Activated CD8-positive, alpha-beta memory T cell treated with anti-CD3 and anti-CD28 coated beads, Interleukin-2, amount 10 ng/mL, durations not matched to agents 7 days and 5 days (primary cell): ENCODE measurements at regions of chr4 and their contacts with region 1.

Region 1: GRCh38 chr4:83284193-83285054 is at the start of gene COQ2:
- DNase-seq: peak; percentile 97
- ATAC-seq: peak; percentile 94
- H3K4me3 Mint-ChIP-seq: peak within 1 kb of the TSS; percentile 86
- H3K27ac Mint-ChIP-seq: peak within 1 kb of the TSS; percentile 99
- H3K4me1 Mint-ChIP-seq: peaks cover 46% of the 10 kb centered on the region
- H3K27me3 Mint-ChIP-seq: no peaks in the 10 kb centered on the region
- total RNA-seq, gene COQ2: 20.6 to 21.9 TPM

Region 2: DNA sequence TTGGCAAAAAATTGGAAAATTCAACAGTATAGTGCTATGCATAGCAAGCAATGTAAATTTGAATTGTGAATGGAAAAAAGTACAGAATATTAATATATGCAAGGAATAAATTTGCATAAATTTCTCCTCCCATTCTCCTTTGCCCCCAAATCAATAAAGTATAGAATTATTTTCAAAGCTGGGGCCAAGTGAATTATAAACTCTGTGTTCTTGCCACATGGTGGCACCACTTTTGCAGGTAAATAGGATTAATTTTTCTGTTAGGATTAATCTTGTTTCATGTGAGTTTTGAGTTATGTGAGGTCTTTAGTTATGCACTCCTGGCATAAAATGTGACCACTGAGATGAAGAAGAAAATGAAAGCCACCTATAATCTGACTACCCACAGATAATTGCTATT is 229.5 kb before region 1 on chr4:
- CTCF ChIA-PET with region 1: interaction called, 16 read pairs
- DNase-seq: no peak
- ATAC-seq: no peak
- H3K4me3 Mint-ChIP-seq: no peak overlapping the region
- H3K27ac Mint-ChIP-seq: no peak overlapping the region
- H3K4me1 Mint-ChIP-seq: peaks cover 2% of the 10 kb centered on the region
- H3K27me3 Mint-ChIP-seq: no peaks in the 10 kb centered on the region

Region 3: GRCh38 chr4:83083925-83084475 is 200.4 kb before region 1 on chr4:
- CTCF ChIA-PET with region 1: interaction called, 13 read pairs
- DNase-seq: peak; percentile 87
- ATAC-seq: peak; percentile 98
- H3K4me3 Mint-ChIP-seq: no peak overlapping the region
- H3K27ac Mint-ChIP-seq: peak overlapping the region; percentile 84
- H3K4me1 Mint-ChIP-seq: peaks cover 26% of the 10 kb centered on the region
- H3K27me3 Mint-ChIP-seq: no peaks in the 10 kb centered on the region

Region 4: GRCh38 chr4:83267121-83267829 is 17.1 kb before region 1 on chr4:
- CTCF ChIA-PET with region 1: interaction called, 105 read pairs
- DNase-seq: no peak
- ATAC-seq: no peak
- H3K4me3 Mint-ChIP-seq: no peak overlapping the region
- H3K27ac Mint-ChIP-seq: no peak overlapping the region
- H3K4me1 Mint-ChIP-seq: peaks cover 30% of the 10 kb centered on the region
- H3K27me3 Mint-ChIP-seq: no peaks in the 10 kb centered on the region

Region 5: GRCh38 chr4:83387753-83388676 is 103.6 kb after region 1 on chr4:
- CTCF ChIA-PET with region 1: interaction called, 10 read pairs
- DNase-seq: peak; percentile 65
- ATAC-seq: peak; percentile 86
- H3K4me3 Mint-ChIP-seq: no peak overlapping the region
- H3K27ac Mint-ChIP-seq: peak overlapping the region; percentile 48
- H3K4me1 Mint-ChIP-seq: peaks cover 13% of the 10 kb centered on the region
- H3K27me3 Mint-ChIP-seq: no peaks in the 10 kb centered on the region

Region 6: DNA sequence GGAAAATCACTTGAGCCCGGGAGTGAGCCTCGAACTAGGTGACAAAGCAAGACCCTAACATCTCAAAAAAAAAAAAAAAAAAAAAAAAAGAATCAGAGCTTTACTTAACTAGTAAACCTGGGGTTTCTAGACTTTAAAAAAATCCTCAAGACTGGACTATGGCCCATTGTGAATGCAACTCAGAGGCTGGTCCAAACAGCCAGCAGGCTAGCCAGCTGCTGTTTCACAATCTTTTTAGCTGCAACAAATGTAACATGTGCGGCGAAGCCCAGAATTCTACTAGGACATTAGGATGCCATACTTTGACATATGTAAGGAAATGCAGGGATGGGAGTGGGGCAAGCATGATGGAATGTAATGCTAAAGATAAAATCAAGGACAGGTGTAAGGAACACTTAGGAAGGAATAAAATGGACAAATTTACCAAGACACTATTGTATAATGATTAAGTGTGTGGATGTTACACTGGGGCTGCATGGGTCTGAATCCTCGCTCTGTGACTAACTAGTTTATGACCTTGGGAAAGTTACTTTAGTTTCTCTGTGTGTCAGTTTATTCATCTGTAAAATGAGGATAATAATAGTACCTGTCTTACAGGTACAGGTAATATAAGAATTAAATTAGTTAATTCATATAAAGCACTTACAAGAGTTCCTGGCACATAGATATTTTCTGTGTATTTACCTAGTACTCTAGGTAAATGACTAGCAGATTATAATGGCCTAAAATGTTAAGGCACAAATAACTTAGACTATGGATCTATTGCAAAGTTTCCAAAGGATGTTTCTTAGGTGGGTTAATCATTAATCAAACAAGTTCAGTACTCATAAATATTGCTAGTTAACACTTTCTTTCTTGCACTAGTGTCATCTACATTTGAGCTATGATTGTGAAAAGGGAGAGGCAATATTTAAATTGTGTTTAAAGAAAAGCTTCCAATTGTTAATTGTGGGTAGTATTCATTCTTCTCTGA is 121.7 kb after region 1 on chr4:
- CTCF ChIA-PET with region 1: no interaction called
- DNase-seq: no peak
- ATAC-seq: no peak
- H3K4me3 Mint-ChIP-seq: no peak overlapping the region
- H3K27ac Mint-ChIP-seq: no peak overlapping the region
- H3K4me1 Mint-ChIP-seq: no peaks in the 10 kb centered on the region
- H3K27me3 Mint-ChIP-seq: no peaks in the 10 kb centered on the region